CD4-positive, alpha-beta memory T cell (primary cell): ENCODE measurements at regions of chr12 and their contacts with region 1.

Region 1: DNA sequence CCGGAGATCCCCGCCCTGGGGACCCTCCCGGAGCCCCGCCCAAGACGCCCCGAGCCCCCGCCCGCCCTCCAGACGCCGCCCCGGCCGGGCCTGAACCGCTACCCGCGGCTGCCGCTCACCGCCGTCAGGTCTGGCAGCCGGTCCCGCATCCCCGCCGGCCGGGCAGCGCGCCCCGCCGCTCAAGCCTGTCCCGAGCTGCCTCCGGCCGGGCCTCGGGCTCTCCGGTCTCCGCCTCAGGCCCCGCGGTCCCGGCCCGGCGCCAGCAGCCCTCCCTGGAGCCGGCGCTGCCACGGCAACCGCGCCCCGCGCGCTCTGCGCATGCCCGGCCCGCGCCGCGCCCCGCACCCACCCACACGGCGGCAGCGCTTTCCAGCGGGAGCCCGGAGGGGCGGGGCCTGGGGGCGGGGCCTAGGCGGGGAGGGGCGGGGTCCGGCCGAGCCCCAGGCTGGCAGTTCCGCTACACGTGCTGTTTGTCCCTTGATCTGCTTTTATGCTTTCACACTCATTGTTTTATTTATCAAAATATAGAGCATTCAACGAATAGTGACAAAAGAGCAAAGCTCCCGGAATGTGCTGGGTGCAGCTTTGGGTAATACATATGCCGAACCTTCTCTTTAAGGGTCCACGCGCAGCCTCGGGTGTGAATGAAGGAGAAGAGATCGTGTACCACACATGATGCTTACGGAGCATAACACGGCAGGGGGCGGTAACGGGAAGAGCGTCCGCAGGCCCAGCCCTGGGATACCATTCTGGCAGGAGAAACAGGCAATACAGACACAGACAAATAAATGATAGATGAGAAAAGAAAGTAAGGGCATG is at the start of gene STX2:
- DNase-seq: peak; percentile 82 to 94 (median 90)
- H3K4me3 ChIP-seq: peak within 1 kb of the TSS; percentile 34 to 57
- H3K4me3 Mint-ChIP-seq: peak within 1 kb of the TSS; percentile 82 to 90 (median 86)
- H3K27ac ChIP-seq: peak within 1 kb of the TSS; percentile 52
- H3K27ac Mint-ChIP-seq: peak within 1 kb of the TSS; percentile 77 to 96 (median 95)
- H3K4me1 ChIP-seq: peaks cover 17% of the 10 kb centered on the region
- H3K4me1 Mint-ChIP-seq: peaks cover 23 to 34% (median 30%) of the 10 kb centered on the region in 4 donors
- H3K27me3 ChIP-seq: no peaks in the 10 kb centered on the region
- H3K27me3 Mint-ChIP-seq: no peaks in the 10 kb centered on the region
- total RNA-seq, gene STX2: 30.2 to 35.3 TPM

Region 2: DNA sequence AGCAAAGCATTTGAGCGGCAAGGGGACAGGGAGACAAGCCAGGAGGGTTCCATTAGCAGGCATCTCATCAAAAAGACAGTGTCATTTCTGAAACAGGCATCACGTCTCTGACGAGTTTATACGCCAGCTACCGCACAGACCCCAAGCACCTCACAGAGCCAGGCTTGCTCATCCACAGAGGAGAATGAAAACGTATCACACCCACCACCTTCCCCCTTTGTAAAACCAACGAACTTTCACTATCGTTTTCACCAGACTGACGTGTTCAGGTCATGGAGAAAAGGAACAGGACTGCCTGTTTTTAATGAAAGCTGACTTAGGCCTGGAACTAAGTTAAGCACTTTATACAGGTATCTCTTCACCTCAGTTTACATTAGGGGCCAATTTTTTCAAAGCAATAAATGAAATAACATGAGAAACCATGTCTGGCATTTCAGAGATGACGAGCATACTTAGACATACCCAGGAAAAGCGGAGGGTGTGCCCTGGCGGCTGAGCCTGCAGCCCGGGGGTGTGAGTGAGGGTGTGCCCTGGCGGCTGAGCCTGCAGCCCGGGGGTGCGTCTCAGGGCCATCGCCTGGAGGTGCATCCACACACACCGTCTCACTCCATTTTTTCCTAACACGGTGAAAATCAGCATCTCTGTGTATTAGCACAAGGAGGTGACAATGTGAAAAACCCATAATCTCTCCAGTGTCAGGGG is 42.0 kb before region 1 on chr12:
- CTCF ChIA-PET with region 1: no interaction called
- POLR2A ChIA-PET with region 1: no interaction called
- intact Hi-C with region 1: loop called (anchors 1 kb)
- DNase-seq: peak; percentile 47 to 77 (median 58)
- H3K4me3 ChIP-seq: peak overlapping the region in 1 of 2 donors; percentile 53
- H3K4me3 Mint-ChIP-seq: peak overlapping the region; percentile 77 to 93 (median 85)
- H3K27ac ChIP-seq: peak overlapping the region; percentile 52
- H3K27ac Mint-ChIP-seq: peak overlapping the region; percentile 93 to 97 (median 95)
- H3K4me1 ChIP-seq: peaks cover 11% of the 10 kb centered on the region
- H3K4me1 Mint-ChIP-seq: peaks cover 9 to 16% (median 14%) of the 10 kb centered on the region in 4 donors
- H3K27me3 ChIP-seq: no peaks in the 10 kb centered on the region
- H3K27me3 Mint-ChIP-seq: no peaks in the 10 kb centered on the region

Region 3: DNA sequence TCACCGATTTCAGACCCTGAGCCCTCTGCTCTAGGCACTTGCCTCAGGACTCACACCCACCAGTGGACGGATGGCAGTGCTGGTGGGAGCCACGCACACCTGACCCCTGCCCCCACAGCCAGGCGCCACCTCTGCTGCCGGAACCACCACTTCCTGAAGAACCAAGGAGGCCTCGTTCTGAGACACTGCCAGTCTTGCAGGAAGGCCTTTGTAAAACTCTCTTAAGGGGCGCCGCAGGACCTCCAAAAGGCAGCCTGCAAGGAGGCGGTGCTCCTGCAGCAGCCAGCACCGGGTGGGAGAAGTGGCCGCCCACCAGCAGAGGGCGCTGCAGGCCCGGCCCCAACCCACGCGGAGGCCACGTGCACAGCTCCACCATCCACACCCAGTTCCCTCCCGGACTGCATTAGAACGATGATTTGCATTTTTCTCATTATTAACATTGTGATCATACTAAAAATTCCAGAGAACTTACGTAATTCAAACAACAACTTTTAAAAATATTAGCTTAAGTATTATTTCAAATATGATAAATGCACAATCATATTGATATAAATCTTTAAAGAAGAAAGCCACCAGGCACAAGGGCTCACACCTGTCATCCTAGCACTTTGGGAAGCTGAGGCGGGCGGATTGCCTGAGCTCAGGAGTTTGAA is 12.9 kb before region 1 on chr12:
- CTCF ChIA-PET with region 1: interaction called, 62 read pairs
- POLR2A ChIA-PET with region 1: interaction called, 5 read pairs
- intact Hi-C with region 1: no loop called
- DNase-seq: peak; percentile 61 to 70 (median 68)
- H3K4me3 ChIP-seq: no peak overlapping the region
- H3K4me3 Mint-ChIP-seq: no peak overlapping the region
- H3K27ac ChIP-seq: no peak overlapping the region
- H3K27ac Mint-ChIP-seq: peak overlapping the region in 3 of 7 donors; percentile 4 to 61 (median 6)
- H3K4me1 ChIP-seq: no peaks in the 10 kb centered on the region
- H3K4me1 Mint-ChIP-seq: peaks cover 10 to 19% (median 13%) of the 10 kb centered on the region in 4 donors
- H3K27me3 ChIP-seq: no peaks in the 10 kb centered on the region
- H3K27me3 Mint-ChIP-seq: no peaks in the 10 kb centered on the region

Region 4: DNA sequence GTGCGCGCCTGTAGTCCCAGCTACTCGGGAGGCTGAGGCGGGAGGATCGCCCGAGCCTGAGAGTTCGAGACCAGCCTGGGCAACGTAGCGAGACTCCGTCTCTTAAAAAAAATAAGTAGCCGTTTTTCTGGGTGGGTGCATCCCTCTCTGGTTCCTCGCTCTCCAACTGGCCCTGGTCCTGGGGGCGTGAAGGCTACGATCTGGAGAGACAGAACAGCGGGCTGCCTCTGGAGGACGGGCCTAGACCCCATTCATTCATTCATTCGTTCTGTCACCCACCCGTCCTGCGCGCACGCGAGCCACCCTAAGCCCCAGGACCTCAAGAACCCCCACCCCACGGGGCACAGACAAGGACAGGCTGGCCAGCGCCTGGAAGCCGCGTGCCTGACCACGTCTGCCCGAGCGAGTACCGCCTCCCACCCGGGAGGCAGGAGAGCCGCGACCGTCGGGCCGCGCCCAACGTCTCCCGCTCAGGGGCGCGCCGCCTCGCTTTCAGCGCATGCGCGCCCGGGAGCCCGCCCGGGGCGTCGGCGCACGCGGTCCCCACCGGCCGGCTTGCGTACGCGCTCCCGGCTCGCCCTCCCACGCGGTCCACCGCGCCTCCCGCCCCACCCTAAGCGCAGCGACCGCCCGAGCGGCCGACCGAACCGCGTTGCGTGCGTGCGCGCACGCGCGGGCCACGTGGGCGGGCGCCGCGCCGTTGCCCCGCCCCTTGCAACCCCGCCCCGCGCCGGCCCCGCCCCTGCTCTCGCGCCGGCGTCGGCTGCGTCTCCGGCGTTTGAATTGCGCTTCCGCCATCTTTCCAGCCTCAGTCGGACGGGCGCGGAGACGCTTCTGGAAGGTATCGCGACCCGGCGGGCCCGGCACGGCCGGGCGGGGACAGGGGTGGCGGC is 32.4 kb after region 1 on chr12 and contains the start of gene RAN:
- CTCF ChIA-PET with region 1: interaction called, 17 read pairs
- POLR2A ChIA-PET with region 1: interaction called, 22 read pairs
- intact Hi-C with region 1: loop called (anchors 1 kb)
- DNase-seq: peak; percentile 86 to 95 (median 92)
- H3K4me3 ChIP-seq: peak within 1 kb of the TSS; percentile 65 to 89
- H3K4me3 Mint-ChIP-seq: peak within 1 kb of the TSS; percentile 91 to 94 (median 93)
- H3K27ac ChIP-seq: peak within 1 kb of the TSS; percentile 76
- H3K27ac Mint-ChIP-seq: peak within 1 kb of the TSS; percentile 92 to 97 (median 95)
- H3K4me1 ChIP-seq: peaks cover 65% of the 10 kb centered on the region
- H3K4me1 Mint-ChIP-seq: peaks cover 41 to 77% (median 59%) of the 10 kb centered on the region in 4 donors
- H3K27me3 ChIP-seq: no peaks in the 10 kb centered on the region
- H3K27me3 Mint-ChIP-seq: no peaks in the 10 kb centered on the region
- total RNA-seq, gene RAN: 289 to 333 TPM